ENCODE measurements at regions of chr5 and their contacts with region 1.

Region 1: GRCh38 chr5:152855441-152855840 is 450.4 kb upstream of the NMUR2 start:
- DNase-seq: no peak
- ATAC-seq: no peak
- H3K4me3 ChIP-seq: no peak overlapping the region
- H3K27ac ChIP-seq: no peak overlapping the region
- H3K4me1 ChIP-seq: peaks cover 0 to 10% (median 0%) of the 10 kb centered on the region in 12 donors
- H3K27me3 ChIP-seq: no peaks in the 10 kb centered on the region
- CTCF ChIP-seq: no peak
- POLR2A ChIP-seq: no peak

Region 2: DNA sequence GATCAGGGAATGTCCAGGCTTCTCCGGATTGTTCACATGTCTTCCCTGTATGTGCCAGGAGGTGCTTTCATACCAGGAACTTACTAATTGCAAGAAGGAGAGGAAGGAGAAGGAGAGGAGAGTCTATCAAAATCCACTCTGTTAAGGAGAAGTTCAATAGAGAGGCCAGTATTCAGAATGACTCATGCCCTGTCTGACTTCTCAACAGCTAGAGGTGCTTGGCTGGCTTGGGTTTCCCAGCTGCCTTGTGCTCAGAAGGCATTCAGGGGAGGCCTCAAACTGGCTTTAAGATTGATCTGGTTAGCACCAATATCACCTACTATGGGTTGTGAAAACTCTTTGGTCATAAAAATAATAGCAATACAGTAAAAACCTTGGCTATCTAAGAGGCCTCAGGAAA is 762.9 kb before region 1 on chr5:
- intact Hi-C with region 1: loop called in 1 of 10 experiments (anchors 10 kb)
- DNase-seq: no peak
- ATAC-seq: no peak
- H3K4me3 ChIP-seq: no peak overlapping the region
- H3K27ac ChIP-seq: no peak overlapping the region
- H3K4me1 ChIP-seq: no peaks in the 10 kb centered on the region
- H3K27me3 ChIP-seq: peaks cover 0 to 6% (median 0%) of the 10 kb centered on the region in 9 donors
- CTCF ChIP-seq: no peak
- POLR2A ChIP-seq: no peak

Region 3: GRCh38 chr5:152560512-152561137 is 294.8 kb before region 1 on chr5:
- intact Hi-C with region 1: no loop called
- DNase-seq: peak; percentile 50 to 71 (median 64)
- ATAC-seq: peak in 3 of 4 donors; percentile 62 to 72 (median 64)
- H3K4me3 ChIP-seq: no peak overlapping the region
- H3K27ac ChIP-seq: no peak overlapping the region
- H3K4me1 ChIP-seq: no peaks in the 10 kb centered on the region
- H3K27me3 ChIP-seq: no peaks in the 10 kb centered on the region
- CTCF ChIP-seq: peak; percentile 65 to 92 (median 82)
- POLR2A ChIP-seq: no peak

Region 4: GRCh38 chr5:152883066-152883775 is 27.8 kb after region 1 on chr5:
- intact Hi-C with region 1: no loop called
- DNase-seq: no peak
- ATAC-seq: no peak
- H3K4me3 ChIP-seq: no peak overlapping the region
- H3K27ac ChIP-seq: no peak overlapping the region
- H3K4me1 ChIP-seq: no peaks in the 10 kb centered on the region
- H3K27me3 ChIP-seq: no peaks in the 10 kb centered on the region
- CTCF ChIP-seq: no peak
- POLR2A ChIP-seq: no peak

Measured in heart left ventricle (tissue), 16 donors.